A549 (cell line): ENCODE measurements at regions of chr10 and their contacts with region 1.

Region 1: DNA sequence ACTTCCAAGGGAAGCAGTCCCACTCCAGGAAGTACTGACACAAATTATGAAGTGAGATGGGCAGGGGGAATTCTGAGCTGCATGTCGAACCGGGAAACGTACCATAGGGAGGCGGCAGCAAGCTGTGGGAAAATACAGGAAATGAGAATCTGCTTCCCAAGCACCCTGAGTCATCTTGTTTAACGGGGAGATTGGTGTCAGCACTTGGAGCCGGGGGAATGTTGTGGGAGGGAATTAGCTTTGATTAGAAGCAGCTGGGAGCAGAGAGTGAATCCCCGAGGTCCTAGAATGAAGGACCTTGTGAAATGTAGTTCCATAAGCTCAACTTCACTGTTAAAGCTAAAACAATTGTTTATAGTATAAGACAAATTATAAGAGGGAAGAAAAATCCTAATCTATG is 141.4 kb upstream of the PRKCQ start:
- DNase-seq: peak; percentile 69 to 87
- ATAC-seq: peak; percentile 87 to 89
- H3K4me3 ChIP-seq: peak overlapping the region; percentile 29; the same call in 2 of the 3 replicates
- H3K27ac ChIP-seq: peak overlapping the region; percentile 74 to 82
- H3K4me1 ChIP-seq: peaks cover 32% of the 10 kb centered on the region
- CTCF ChIP-seq: peak; percentile 37
- EP300 ChIP-seq: no peak
- POLR2A ChIP-seq: no peak
- RAD21 ChIP-seq: peak; percentile 62 to 67

Region 2: GRCh38 chr10:6737758-6738505 is 16.5 kb after region 1 on chr10:
- CTCF ChIA-PET with region 1: interaction called, 10 read pairs
- POLR2A ChIA-PET with region 1: interaction called, 20 read pairs
- DNase-seq: peak; percentile 39 to 60
- ATAC-seq: peak; percentile 72 to 80
- H3K4me3 ChIP-seq: peak overlapping the region; percentile 52
- H3K27ac ChIP-seq: peak overlapping the region; percentile 84 to 93
- H3K4me1 ChIP-seq: peaks cover 50% of the 10 kb centered on the region
- CTCF ChIP-seq: no peak
- EP300 ChIP-seq: no peak
- POLR2A ChIP-seq: peak; percentile 15; the same call in 1 of the 2 replicates
- RAD21 ChIP-seq: no peak